Right cardiac atrium (tissue), 5 donors: ENCODE measurements at regions of chr17 and their contacts with region 1.

Region 1: DNA sequence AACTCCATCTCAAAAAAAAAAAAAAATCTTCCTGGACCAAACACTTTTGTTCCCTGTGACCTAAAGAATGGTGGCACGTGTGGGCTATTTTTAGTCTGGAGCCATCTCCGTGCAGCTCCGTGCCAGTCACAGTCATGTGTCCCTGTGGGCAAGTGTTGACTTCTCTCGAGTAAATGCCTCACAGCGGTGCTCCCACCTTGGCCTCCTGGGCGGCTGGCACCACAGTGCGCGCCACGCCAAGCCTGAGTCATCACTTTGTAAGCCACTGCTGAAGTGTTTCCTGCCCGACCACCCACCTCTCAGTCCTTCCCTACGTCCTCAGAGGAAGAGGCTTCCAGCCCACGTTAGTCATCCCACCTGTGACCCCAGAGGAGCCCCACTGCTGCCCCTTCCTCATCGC is 10.9 kb upstream of the HEXD start:
- DNase-seq: peak in 2 of 3 donors; percentile 43 to 71
- ATAC-seq: peak; percentile 69 to 89
- H3K4me3 ChIP-seq: no peak overlapping the region
- H3K27ac ChIP-seq: peak overlapping the region; percentile 37
- H3K4me1 ChIP-seq: no peaks in the 10 kb centered on the region
- H3K27me3 ChIP-seq: no peaks in the 10 kb centered on the region

Region 2: GRCh38 chr17:82358465-82359350 is 48.5 kb before region 1 on chr17 and contains the start of gene TEX19:
- intact Hi-C with region 1: loop called in 2 of 4 experiments (anchors 5 to 10 kb)
- DNase-seq: no peak
- ATAC-seq: no peak
- H3K4me3 ChIP-seq: no peak within 1 kb of the TSS
- H3K27ac ChIP-seq: no peak within 1 kb of the TSS
- H3K4me1 ChIP-seq: no peaks in the 10 kb centered on the region
- H3K27me3 ChIP-seq: no peaks in the 10 kb centered on the region
- total RNA-seq, gene TEX19: not detected